Activated CD4-positive, alpha-beta memory T cell treated with anti-CD3 and anti-CD28 coated beads, Interleukin-2, amount 10 ng/mL, durations not matched to agents 7 days and 5 days (primary cell): ENCODE measurements at regions of chr13 and their contacts with region 1.

Region 1: DNA sequence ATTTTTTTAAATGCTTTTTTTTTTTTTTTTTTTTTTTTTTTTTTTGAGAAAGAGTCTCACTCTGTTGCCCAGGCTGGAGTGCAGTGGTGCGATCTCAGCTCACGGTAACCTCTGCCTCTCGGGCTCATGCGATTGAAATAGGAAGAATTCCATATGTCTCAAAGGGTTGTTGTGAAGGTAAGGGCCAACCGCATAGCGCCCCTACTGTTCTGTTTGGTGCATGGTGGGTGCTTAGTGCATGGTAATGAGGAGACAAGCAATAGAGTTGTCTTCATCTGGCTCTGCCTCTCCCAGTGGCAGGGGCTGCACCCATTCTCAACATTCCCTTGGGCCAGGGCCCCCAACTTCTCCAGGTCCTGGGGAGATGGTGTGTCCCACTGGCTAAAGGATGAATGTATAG is 68.7 kb downstream of the RASL11A start:
- DNase-seq: peak; percentile 38
- H3K4me3 Mint-ChIP-seq: no peak overlapping the region
- H3K27ac Mint-ChIP-seq: no peak overlapping the region
- H3K4me1 Mint-ChIP-seq: no peaks in the 10 kb centered on the region
- H3K27me3 Mint-ChIP-seq: peaks cover 20% of the 10 kb centered on the region

Region 2: GRCh38 chr13:27353166-27353583 is 13.9 kb after region 1 on chr13:
- CTCF ChIA-PET with region 1: interaction called, 10 read pairs
- POLR2A ChIA-PET with region 1: interaction called, 3 read pairs
- DNase-seq: peak; percentile 56
- H3K4me3 Mint-ChIP-seq: peak overlapping the region; percentile 40
- H3K27ac Mint-ChIP-seq: peak overlapping the region; percentile 76
- H3K4me1 Mint-ChIP-seq: peaks cover 19% of the 10 kb centered on the region
- H3K27me3 Mint-ChIP-seq: peaks cover 14% of the 10 kb centered on the region